ENCODE measurements at regions of chrX and their contacts with region 1.

Region 1: DNA sequence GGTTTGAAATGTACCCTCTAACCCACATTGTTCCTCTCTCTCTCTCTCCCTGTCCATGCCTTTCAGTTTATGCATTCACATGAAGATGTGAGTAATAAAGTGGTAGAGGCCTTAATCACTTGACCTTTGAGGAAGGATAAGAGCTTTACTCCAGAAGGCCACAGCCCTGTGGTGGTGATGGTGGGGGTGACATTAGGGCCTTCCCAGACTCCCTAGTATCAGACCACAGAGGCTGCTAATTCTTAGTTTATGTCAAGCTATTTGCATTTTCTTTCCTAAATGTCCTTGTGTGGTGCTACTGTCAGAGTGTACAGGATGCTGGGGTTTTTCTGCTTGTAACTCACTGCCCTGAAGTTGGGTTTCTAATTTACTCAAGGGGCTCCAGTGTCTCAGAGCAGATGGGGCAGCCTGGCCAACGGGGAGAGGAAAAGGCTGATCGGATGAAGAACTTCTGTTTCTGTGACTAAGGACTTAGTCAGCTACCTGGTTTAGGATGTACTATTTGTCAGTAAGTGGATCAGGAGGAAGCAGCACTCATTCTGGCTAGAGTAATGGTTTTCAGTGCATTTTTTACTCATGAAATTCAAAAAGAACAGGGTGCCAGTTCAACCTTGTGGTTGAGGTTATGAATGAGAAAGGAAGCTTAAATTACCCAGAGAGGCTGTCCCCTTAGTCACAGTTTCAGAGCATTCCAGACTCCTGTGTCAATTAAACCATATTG is 509.6 kb upstream of the DIPK2B start:
- DNase-seq: peak; percentile 96
- ATAC-seq: peak; percentile 68
- H3K4me3 ChIP-seq: no peak overlapping the region
- H3K27ac ChIP-seq: peak overlapping the region; percentile 100
- H3K4me1 ChIP-seq: peaks cover 62% of the 10 kb centered on the region
- H3K27me3 ChIP-seq: no peaks in the 10 kb centered on the region
- CTCF ChIP-seq: no peak

Region 2: DNA sequence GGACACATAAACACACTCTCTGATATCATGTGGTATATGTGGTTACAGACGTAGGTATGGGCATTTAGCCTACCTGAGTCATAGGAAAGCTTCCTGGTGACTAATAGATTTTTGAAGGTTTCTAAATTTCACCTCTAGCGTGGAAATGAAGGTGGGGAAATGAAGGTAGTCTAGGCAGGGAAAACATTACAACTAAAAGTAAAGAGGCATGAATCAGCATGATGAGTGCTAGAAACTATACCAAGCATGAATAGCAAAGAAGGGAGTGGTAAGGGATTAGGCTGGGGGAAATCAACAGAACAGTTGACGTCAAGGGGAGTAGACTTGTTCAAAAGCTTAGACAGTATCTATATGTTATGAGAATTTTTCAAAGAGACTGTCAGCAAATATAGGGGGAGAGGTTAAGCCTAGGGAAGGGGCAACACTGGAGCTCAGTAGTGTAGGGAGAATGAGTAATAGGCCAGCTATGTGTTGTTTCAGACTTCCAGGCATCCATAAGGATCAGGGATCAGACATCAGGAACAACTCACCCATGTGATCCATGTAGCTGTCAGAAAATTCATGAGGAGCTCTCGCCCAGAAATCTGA is 230.3 kb before region 1 on chrX:
- CTCF ChIA-PET with region 1: no interaction called
- POLR2A ChIA-PET with region 1: interaction called, 6 read pairs
- intact Hi-C with region 1: loop called (anchors 1 kb)
- DNase-seq: peak; percentile 96
- ATAC-seq: peak; percentile 83
- H3K4me3 ChIP-seq: no peak overlapping the region
- H3K27ac ChIP-seq: peak overlapping the region; percentile 100
- H3K4me1 ChIP-seq: peaks cover 48% of the 10 kb centered on the region
- H3K27me3 ChIP-seq: no peaks in the 10 kb centered on the region
- CTCF ChIP-seq: no peak

Region 3: GRCh38 chrX:45515262-45516215 is 194.7 kb before region 1 on chrX:
- CTCF ChIA-PET with region 1: interaction called, 3 read pairs
- POLR2A ChIA-PET with region 1: interaction called, 7 read pairs
- intact Hi-C with region 1: loop called (anchors 1 kb)
- DNase-seq: peak; percentile 97
- ATAC-seq: peak; percentile 84
- H3K4me3 ChIP-seq: no peak overlapping the region
- H3K27ac ChIP-seq: peak overlapping the region; percentile 99
- H3K4me1 ChIP-seq: peaks cover 48% of the 10 kb centered on the region
- H3K27me3 ChIP-seq: no peaks in the 10 kb centered on the region
- CTCF ChIP-seq: peak; percentile 87

Region 4: DNA sequence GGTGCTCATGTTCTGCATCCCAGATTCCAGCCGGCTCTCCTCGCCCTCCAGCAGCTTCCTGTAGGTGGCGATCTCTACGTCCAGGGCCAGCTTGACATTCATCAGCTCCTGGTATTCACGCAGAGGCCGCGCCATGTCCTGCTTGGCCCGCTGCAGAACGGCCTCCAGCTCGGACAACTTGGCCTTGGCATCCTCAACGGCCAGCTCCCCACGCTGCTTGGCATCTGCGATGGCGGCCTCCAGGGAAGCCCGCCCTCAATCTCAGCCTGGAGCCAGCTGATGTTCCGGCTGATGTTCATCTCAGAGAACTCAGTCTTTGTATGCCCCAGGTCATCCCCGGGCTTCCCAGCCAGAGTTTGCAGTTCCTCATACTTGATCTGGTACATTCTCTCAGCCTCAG is 77.7 kb before region 1 on chrX:
- CTCF ChIA-PET with region 1: no interaction called
- POLR2A ChIA-PET with region 1: no interaction called
- intact Hi-C with region 1: no loop called
- DNase-seq: no peak
- ATAC-seq: no peak
- H3K4me3 ChIP-seq: no peak overlapping the region
- H3K27ac ChIP-seq: no peak overlapping the region
- H3K4me1 ChIP-seq: no peaks in the 10 kb centered on the region
- H3K27me3 ChIP-seq: no peaks in the 10 kb centered on the region
- CTCF ChIP-seq: no peak

Region 5: DNA sequence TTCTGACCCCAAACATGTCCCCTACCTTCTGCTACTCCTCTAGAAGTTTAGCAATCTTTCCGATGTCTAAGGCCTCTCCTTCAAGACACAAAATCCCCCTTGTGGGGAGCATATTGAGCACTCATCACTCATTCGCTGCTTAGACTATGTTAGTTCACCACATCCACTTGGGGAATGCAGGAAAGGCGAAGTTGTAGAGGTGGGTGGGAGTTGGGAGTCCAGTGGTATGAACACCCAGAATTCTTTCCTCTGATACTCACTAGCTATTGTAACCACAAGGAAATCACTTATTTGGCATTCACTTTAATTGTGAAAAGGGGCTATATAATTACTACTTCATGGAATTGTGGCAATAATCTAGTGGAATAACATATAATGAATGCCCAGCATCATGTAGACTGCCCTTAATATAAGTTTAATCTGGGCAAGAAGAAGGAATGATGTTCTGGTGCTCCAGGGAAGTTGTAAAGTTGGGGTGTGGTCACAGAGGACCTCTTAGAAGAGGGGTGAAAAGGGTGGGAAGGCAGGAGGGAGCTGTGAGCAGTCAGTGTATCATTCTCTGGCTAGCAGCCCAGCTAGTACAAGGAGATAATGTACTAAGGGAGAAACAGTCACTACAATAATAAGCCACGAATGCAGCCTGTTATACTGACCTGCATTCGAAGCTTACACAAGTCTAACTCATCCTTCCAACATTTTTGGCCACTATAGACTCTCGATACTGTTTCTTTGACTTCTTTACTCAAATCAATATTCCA is 41.4 kb before region 1 on chrX:
- CTCF ChIA-PET with region 1: no interaction called
- POLR2A ChIA-PET with region 1: no interaction called
- intact Hi-C with region 1: no loop called
- DNase-seq: peak; percentile 81
- ATAC-seq: peak; percentile 95
- H3K4me3 ChIP-seq: no peak overlapping the region
- H3K27ac ChIP-seq: peak overlapping the region; percentile 34
- H3K4me1 ChIP-seq: peaks cover 11% of the 10 kb centered on the region
- H3K27me3 ChIP-seq: no peaks in the 10 kb centered on the region
- CTCF ChIP-seq: no peak

Region 6: GRCh38 chrX:45735571-45735970 is 25.3 kb after region 1 on chrX:
- CTCF ChIA-PET with region 1: no interaction called
- POLR2A ChIA-PET with region 1: interaction called, 21 read pairs
- intact Hi-C with region 1: loop called (anchors 1 kb)
- DNase-seq: peak; percentile 91
- ATAC-seq: peak; percentile 91
- H3K4me3 ChIP-seq: no peak overlapping the region
- H3K27ac ChIP-seq: peak overlapping the region; percentile 95
- H3K4me1 ChIP-seq: peaks cover 15% of the 10 kb centered on the region
- H3K27me3 ChIP-seq: no peaks in the 10 kb centered on the region
- CTCF ChIP-seq: no peak

Region 7: DNA sequence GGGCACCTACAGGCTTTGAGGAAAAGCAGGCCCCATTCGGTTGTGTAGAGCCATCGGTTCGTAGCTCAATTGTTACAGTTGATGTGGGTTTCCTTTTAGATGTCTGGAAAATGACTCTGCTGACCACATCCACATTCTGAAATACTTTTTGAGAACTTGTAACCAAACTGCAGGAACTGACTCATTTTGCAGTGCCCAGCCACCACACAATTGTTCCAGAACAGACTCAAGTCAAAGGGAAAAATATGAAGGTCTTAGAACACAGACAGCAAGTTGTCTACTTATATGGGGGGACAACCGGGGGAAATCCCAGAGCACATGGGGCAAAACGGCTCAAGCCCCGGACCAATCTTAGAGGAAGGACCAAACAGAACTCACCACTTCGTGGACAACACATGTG is 48.1 kb after region 1 on chrX:
- CTCF ChIA-PET with region 1: no interaction called
- POLR2A ChIA-PET with region 1: interaction called, 29 read pairs
- intact Hi-C with region 1: no loop called
- DNase-seq: peak; percentile 83
- ATAC-seq: peak; percentile 25
- H3K4me3 ChIP-seq: peak overlapping the region; percentile 20; the same call in 1 of the 2 replicates
- H3K27ac ChIP-seq: peak overlapping the region; percentile 92
- H3K4me1 ChIP-seq: peaks cover 92% of the 10 kb centered on the region
- H3K27me3 ChIP-seq: no peaks in the 10 kb centered on the region
- CTCF ChIP-seq: no peak

Measured in PC-3 (cell line).